B cell (primary cell): ENCODE measurements at regions of chr4 and their contacts with region 1.

Region 1: DNA sequence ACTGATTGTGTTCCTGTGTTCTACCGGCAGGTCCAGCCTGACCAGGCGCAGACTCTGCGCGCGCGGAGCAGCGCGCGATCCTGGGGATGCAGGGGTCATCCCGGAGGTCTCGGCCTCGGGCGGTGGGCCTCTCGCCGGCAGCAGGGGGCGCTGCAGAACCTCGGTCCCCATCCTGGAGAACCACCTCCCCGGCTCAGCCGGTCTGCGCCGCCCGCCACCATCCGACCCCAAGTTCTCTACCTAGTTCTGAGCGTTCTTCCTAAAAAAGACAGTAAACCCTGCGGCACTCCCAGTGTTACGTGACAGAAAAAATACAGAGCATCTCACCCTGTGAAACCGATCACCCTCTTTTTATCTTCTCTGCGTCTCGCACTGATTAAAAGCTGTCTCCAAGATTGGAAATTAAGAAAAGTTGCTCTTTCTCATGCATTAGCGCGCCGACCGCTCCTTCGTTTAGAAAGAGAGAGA is 1.6 kb downstream of the TRPC3 start:
- DNase-seq: peak; percentile 72
- ATAC-seq: peak; percentile 75
- H3K4me3 ChIP-seq: peak overlapping the region; percentile 40 to 81 (median 64)
- H3K4me3 Mint-ChIP-seq: peak overlapping the region; percentile 94
- H3K27ac ChIP-seq: no peak overlapping the region
- H3K27ac Mint-ChIP-seq: no peak overlapping the region
- H3K4me1 ChIP-seq: peaks cover 14 to 16% of the 10 kb centered on the region in 2 donors
- H3K4me1 Mint-ChIP-seq: peaks cover 19% of the 10 kb centered on the region
- H3K27me3 ChIP-seq: peaks cover 0 to 37% (median 28%) of the 10 kb centered on the region in 4 experiments
- H3K27me3 Mint-ChIP-seq: peaks cover 69% of the 10 kb centered on the region
- CTCF ChIP-seq: peak; percentile 62

Region 2: GRCh38 chr4:122003335-122003734 is 53.1 kb after region 1 on chr4:
- CTCF ChIA-PET with region 1: interaction called, 8 read pairs
- POLR2A ChIA-PET with region 1: no interaction called
- intact Hi-C with region 1: loop called (anchors 1 kb)
- DNase-seq: peak; percentile 13
- ATAC-seq: peak; percentile 65
- H3K4me3 ChIP-seq: no peak overlapping the region
- H3K4me3 Mint-ChIP-seq: no peak overlapping the region
- H3K27ac ChIP-seq: no peak overlapping the region
- H3K27ac Mint-ChIP-seq: no peak overlapping the region
- H3K4me1 ChIP-seq: no peaks in the 10 kb centered on the region
- H3K4me1 Mint-ChIP-seq: no peaks in the 10 kb centered on the region
- H3K27me3 ChIP-seq: peaks cover 0 to 11% (median 3%) of the 10 kb centered on the region in 4 experiments
- H3K27me3 Mint-ChIP-seq: peaks cover 30% of the 10 kb centered on the region
- CTCF ChIP-seq: peak; percentile 58

Region 3: DNA sequence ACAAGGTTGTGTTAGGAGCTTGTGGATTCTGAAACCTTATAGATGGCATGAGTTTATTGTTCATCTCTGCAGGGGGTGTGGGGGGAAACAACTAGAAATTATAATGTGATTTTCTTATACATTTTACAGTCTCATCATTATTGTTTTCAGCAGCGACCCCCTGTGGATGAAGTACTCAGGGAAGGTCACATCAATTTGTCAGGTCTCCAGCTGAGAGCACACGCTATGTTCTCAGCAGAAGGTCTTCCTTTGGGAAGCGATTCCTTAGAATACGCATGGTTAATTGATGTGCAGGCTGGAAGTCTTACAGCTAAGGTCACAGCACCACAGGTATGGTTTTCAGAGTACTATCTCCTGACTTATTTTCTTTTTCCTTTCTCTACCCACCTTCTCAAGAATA is 274.1 kb after region 1 on chr4:
- CTCF ChIA-PET with region 1: no interaction called
- POLR2A ChIA-PET with region 1: no interaction called
- intact Hi-C with region 1: loop called (anchors 5 kb)
- DNase-seq: peak; percentile 9
- ATAC-seq: no peak
- H3K4me3 ChIP-seq: no peak overlapping the region
- H3K4me3 Mint-ChIP-seq: no peak overlapping the region
- H3K27ac ChIP-seq: no peak overlapping the region
- H3K27ac Mint-ChIP-seq: no peak overlapping the region
- H3K4me1 ChIP-seq: no peaks in the 10 kb centered on the region
- H3K4me1 Mint-ChIP-seq: no peaks in the 10 kb centered on the region
- H3K27me3 ChIP-seq: no peaks in the 10 kb centered on the region
- H3K27me3 Mint-ChIP-seq: no peaks in the 10 kb centered on the region
- CTCF ChIP-seq: peak; percentile 15